Posterior vena cava (tissue), 2 donors: ENCODE measurements at regions of chr1 and their contacts with region 1.

Region 1: DNA sequence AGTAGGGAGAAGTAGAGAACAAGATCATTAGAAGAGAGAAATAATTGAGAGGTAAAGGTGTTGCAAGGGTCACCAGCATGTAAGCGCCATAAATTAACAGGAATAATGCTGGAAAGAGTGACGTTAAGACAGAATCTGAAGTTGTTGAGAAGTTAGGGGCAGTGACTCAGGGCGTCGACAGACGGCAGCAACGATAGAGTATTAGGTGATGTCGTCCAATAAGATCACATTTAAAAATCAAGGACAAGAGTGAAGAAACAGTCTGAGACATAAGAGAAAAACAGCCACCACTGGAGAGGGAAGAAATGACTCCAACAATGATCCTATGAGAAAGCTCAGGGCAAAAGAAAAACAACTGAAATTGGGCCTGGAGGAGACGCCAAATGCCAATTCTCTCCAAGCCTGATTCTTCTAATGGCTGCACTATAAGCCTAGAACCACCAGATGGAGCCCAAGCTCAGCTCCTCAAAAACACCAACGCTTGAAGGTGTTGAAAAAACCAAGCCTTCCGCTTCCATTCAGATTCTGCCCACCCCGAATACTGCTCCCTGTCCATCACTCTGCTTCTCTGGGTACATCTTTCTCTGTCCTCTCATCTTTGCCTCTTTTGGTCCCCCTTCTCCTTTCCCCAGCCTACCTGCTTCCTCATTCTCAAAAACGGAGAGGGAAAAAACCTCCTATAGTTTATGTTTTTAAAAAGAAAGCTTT is 70.0 kb downstream of the LUZP1 start:
- DNase-seq: no peak

Region 2: GRCh38 chr1:23129846-23130245 is 31.2 kb after region 1 on chr1:
- intact Hi-C with region 1: no loop called
- DNase-seq: no peak

Region 3: GRCh38 chr1:23177438-23178380 is 79.1 kb after region 1 on chr1:
- intact Hi-C with region 1: loop called (anchors 2 to 5 kb)
- DNase-seq: peak; percentile 94

Region 4: GRCh38 chr1:23184212-23184934 is 85.8 kb after region 1 on chr1:
- intact Hi-C with region 1: loop called (anchors 2 to 5 kb)
- DNase-seq: no peak

Region 5: GRCh38 chr1:23273450-23274133 is 175.0 kb after region 1 on chr1:
- intact Hi-C with region 1: loop called in 1 of 2 experiments (anchors 10 kb)
- DNase-seq: no peak